Heart right ventricle (tissue), 16 donors: ENCODE measurements at regions of chr1 and their contacts with region 1.

Region 1: GRCh38 chr1:91804546-91805023 is 81.4 kb downstream of the TGFBR3 start:
- DNase-seq: no peak
- ATAC-seq: peak in 1 of 8 donors; percentile 9
- H3K4me3 ChIP-seq: no peak overlapping the region
- H3K27ac ChIP-seq: peak overlapping the region in 5 of 10 donors; percentile 6 to 83 (median 28)
- H3K4me1 ChIP-seq: peaks cover 2 to 65% (median 40%) of the 10 kb centered on the region in 9 donors
- H3K27me3 ChIP-seq: no peaks in the 10 kb centered on the region
- CTCF ChIP-seq: no peak

Region 2: GRCh38 chr1:91732291-91733107 is 72.1 kb before region 1 on chr1:
- intact Hi-C with region 1: no loop called
- DNase-seq: no peak
- ATAC-seq: peak in 4 of 8 donors; percentile 1 to 49 (median 18)
- H3K4me3 ChIP-seq: no peak overlapping the region
- H3K27ac ChIP-seq: peak overlapping the region in 4 of 10 donors; percentile 28 to 58 (median 40)
- H3K4me1 ChIP-seq: peaks cover 12 to 76% (median 62%) of the 10 kb centered on the region in 9 donors
- H3K27me3 ChIP-seq: no peaks in the 10 kb centered on the region
- CTCF ChIP-seq: no peak

Region 3: GRCh38 chr1:91924146-91924545 is 119.6 kb after region 1 on chr1:
- intact Hi-C with region 1: loop called in 1 of 10 experiments (anchors 5 kb)
- DNase-seq: no peak
- ATAC-seq: peak in 1 of 8 donors; percentile 16
- H3K4me3 ChIP-seq: no peak overlapping the region
- H3K27ac ChIP-seq: peak overlapping the region in 1 of 10 donors; percentile 45
- H3K4me1 ChIP-seq: peaks cover 0 to 8% (median 2%) of the 10 kb centered on the region in 9 donors
- H3K27me3 ChIP-seq: no peaks in the 10 kb centered on the region
- CTCF ChIP-seq: no peak